ENCODE measurements at regions of chr7 and their contacts with region 1.

Region 1: GRCh38 chr7:99408379-99409191 is at the starts of genes BUD31 and PDAP1:
- DNase-seq: peak; percentile 90
- ATAC-seq: peak; percentile 86
- H3K4me3 ChIP-seq: peak within 1 kb of the TSS; percentile 100
- H3K27ac ChIP-seq: peak within 1 kb of the TSS; percentile 99
- H3K4me1 ChIP-seq: peaks cover 12% of the 10 kb centered on the region
- H3K27me3 ChIP-seq: no peaks in the 10 kb centered on the region
- CTCF ChIP-seq: no peak
- EP300 ChIP-seq: peak in 1 of 2 experiments; percentile 43; a peak in 1 of 4 replicates
- POLR2A ChIP-seq: peak; percentile 88
- RAD21 ChIP-seq: no peak
- polyA plus RNA-seq, gene BUD31: 125 to 127 TPM
- polyA plus RNA-seq, gene PDAP1: 6.6 to 13.8 TPM

Region 2: DNA sequence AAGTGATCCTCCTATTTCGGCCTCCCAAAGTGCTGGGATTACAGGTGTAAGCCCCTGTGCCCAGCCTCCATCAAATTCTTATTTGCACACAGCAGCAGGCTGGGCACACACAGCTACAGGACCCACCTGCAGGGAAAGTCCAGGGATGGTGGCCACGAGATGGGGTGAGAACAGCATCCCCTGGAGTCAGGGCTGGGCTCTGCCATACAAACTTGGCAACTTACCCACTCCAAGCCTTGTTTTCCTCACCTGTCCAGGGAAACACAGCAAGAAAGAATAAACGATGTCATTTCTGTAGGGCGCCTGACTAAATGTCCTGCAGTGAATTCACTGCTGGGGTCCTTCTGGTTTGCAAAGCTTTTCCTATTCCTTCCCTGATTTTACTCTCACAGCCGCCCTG is 130.4 kb before region 1 on chr7:
- CTCF ChIA-PET with region 1: no interaction called
- POLR2A ChIA-PET with region 1: no interaction called
- RAD21 ChIA-PET with region 1: no interaction called
- SMC1A ChIA-PET with region 1: no interaction called
- in situ Hi-C with region 1: no loop called
- intact Hi-C with region 1: no loop called
- DNase-seq: no peak
- ATAC-seq: peak; percentile 45; the same call in 1 of the 3 replicates
- H3K4me3 ChIP-seq: no peak overlapping the region
- H3K27ac ChIP-seq: no peak overlapping the region
- H3K4me1 ChIP-seq: peaks cover 6% of the 10 kb centered on the region
- H3K27me3 ChIP-seq: no peaks in the 10 kb centered on the region; a peak in 1 of 4 replicates
- CTCF ChIP-seq: peak in 1 of 3 experiments; percentile 13; a peak in 1 of 6 replicates
- EP300 ChIP-seq: no peak
- POLR2A ChIP-seq: no peak
- RAD21 ChIP-seq: no peak

Region 3: DNA sequence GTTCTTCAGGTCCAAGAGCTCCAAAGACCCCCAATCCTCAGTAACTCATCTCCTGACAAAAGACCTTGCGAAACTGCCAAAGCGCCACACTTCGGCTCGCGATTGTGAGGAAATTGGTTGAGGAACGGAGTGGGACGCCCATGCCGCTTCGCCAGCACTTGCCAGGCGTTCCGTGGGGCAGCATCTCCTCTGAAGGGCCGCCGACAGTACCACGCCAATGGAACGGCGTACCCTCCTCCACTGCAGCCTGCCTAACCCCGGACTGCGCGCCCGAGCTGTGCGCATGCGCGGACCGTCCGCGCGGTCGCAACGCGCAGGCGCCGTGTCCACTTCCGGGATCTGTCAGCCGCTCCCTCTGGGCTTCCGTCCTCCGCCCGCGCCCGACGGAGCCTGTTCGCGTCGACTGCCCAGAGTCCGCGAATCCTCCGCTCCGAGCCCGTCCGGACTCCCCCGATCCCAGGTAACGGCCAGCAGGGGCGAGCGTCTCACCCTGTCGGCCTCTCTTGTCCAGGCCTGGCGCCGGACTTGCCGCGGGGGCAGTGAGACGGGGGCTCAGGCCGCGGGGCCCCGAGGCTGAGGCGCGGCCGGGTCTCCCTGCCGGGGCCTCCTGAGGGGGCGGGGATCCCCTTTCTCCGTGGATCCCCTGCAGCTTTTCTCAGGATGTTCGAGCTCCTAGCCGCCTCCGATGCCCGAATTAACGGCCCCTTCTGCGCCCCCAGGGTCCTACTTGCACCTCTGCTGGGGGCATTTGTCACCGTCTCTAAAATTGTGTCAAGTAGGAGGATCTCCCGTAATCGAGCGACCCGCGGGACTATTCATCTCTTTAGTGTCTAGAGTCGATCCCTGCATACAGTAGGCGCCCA is 82.8 kb before region 1 on chr7 and contains the start of gene ARPC1A:
- CTCF ChIA-PET with region 1: interaction called, 3 read pairs
- POLR2A ChIA-PET with region 1: interaction called, 16 read pairs
- RAD21 ChIA-PET with region 1: interaction called, 5 read pairs
- SMC1A ChIA-PET with region 1: interaction called, 4 read pairs
- in situ Hi-C with region 1: no loop called
- intact Hi-C with region 1: no loop called
- DNase-seq: peak; percentile 87
- ATAC-seq: peak; percentile 93
- H3K4me3 ChIP-seq: peak within 1 kb of the TSS; percentile 100
- H3K27ac ChIP-seq: peak within 1 kb of the TSS; percentile 63
- H3K4me1 ChIP-seq: peaks cover 4% of the 10 kb centered on the region; the same call in 1 of the 2 replicates
- H3K27me3 ChIP-seq: no peaks in the 10 kb centered on the region
- CTCF ChIP-seq: peak in 2 of 3 experiments; percentile 3 to 10; a peak in 2 of 6 replicates
- EP300 ChIP-seq: no peak
- POLR2A ChIP-seq: peak; percentile 99
- RAD21 ChIP-seq: no peak
- polyA plus RNA-seq, gene ARPC1A: 102 to 103 TPM

Region 4: GRCh38 chr7:99364961-99365817 is 43.4 kb before region 1 on chr7:
- CTCF ChIA-PET with region 1: interaction called, 31 read pairs
- POLR2A ChIA-PET with region 1: no interaction called
- RAD21 ChIA-PET with region 1: interaction called, 7 read pairs
- SMC1A ChIA-PET with region 1: interaction called, 4 read pairs
- in situ Hi-C with region 1: no loop called
- intact Hi-C with region 1: loop called (anchors 5 kb)
- DNase-seq: no peak
- ATAC-seq: peak; percentile 96
- H3K4me3 ChIP-seq: no peak overlapping the region
- H3K27ac ChIP-seq: no peak overlapping the region
- H3K4me1 ChIP-seq: no peaks in the 10 kb centered on the region
- H3K27me3 ChIP-seq: no peaks in the 10 kb centered on the region
- CTCF ChIP-seq: peak; percentile 52 to 71 (median 69)
- EP300 ChIP-seq: no peak
- POLR2A ChIP-seq: no peak
- RAD21 ChIP-seq: peak; percentile 61

Region 5: GRCh38 chr7:99374103-99375064 is 34.2 kb before region 1 on chr7 and contains the start of gene ARPC1B:
- CTCF ChIA-PET with region 1: interaction called, 7 read pairs
- POLR2A ChIA-PET with region 1: interaction called, 51 read pairs
- RAD21 ChIA-PET with region 1: interaction called, 15 read pairs
- SMC1A ChIA-PET with region 1: interaction called, 20 read pairs
- in situ Hi-C with region 1: no loop called
- intact Hi-C with region 1: loop called (anchors 5 kb)
- DNase-seq: no peak
- ATAC-seq: peak; percentile 84
- H3K4me3 ChIP-seq: peak within 1 kb of the TSS; percentile 96
- H3K27ac ChIP-seq: peak within 1 kb of the TSS; percentile 85
- H3K4me1 ChIP-seq: peaks cover 22% of the 10 kb centered on the region
- H3K27me3 ChIP-seq: no peaks in the 10 kb centered on the region
- CTCF ChIP-seq: no peak
- EP300 ChIP-seq: no peak
- POLR2A ChIP-seq: peak; percentile 93
- RAD21 ChIP-seq: no peak
- polyA plus RNA-seq, gene ARPC1B: 14.1 to 135 TPM

Region 6: DNA sequence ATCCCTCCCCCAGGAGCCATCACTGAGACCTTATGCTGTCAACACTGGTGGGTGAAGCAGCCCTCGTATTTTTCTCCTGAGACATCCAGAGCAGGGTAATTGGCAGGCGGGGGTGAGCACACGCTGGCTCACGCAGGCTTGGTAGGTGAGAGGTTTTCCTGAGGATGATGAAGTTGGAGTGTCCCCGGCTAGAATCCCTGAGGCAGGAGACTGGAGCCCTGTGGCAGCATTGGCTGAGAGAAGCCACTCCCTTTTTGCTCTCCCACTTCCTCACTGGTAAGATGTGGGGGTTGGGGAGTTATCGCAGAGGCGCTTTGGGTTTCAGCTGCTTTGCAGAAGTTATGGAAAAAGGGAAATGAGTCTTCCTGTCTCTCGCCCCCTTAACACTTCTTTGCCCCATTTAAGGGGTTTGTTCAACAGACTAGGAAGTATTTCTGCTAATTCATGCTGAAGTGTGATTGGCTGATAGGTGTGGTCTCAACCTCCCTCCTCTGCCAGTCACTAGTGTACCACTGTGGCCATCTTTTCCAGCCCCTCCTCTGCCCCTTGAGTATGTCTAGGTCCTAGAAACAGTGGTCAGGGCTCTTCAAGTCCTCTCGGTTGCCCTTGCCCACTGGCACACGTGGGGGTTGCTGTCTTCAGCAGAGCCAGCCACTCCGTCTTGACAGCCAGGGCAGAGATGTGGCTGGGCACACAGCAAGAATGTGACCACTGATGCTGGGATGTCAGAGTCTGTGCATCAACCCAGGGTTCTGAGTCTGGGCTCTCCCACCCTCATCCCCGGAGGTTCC is 28.4 kb before region 1 on chr7:
- CTCF ChIA-PET with region 1: interaction called, 7 read pairs
- POLR2A ChIA-PET with region 1: interaction called, 51 read pairs
- RAD21 ChIA-PET with region 1: interaction called, 15 read pairs
- SMC1A ChIA-PET with region 1: interaction called, 20 read pairs
- in situ Hi-C with region 1: no loop called
- intact Hi-C with region 1: loop called (anchors 2 kb)
- DNase-seq: peak; percentile 94
- ATAC-seq: peak; percentile 73
- H3K4me3 ChIP-seq: peak overlapping the region; percentile 64
- H3K27ac ChIP-seq: peak overlapping the region; percentile 100
- H3K4me1 ChIP-seq: peaks cover 45% of the 10 kb centered on the region
- H3K27me3 ChIP-seq: no peaks in the 10 kb centered on the region
- CTCF ChIP-seq: no peak
- EP300 ChIP-seq: peak; percentile 56 to 84; a peak in 3 of 4 replicates
- POLR2A ChIP-seq: peak; percentile 67
- RAD21 ChIP-seq: no peak

Region 7: GRCh38 chr7:99438573-99439480 is 30.2 kb after region 1 on chr7 and contains the starts of genes CPSF4 and PTCD1:
- CTCF ChIA-PET with region 1: no interaction called
- POLR2A ChIA-PET with region 1: interaction called, 16 read pairs
- RAD21 ChIA-PET with region 1: interaction called, 8 read pairs
- SMC1A ChIA-PET with region 1: interaction called, 6 read pairs
- in situ Hi-C with region 1: no loop called
- intact Hi-C with region 1: no loop called
- DNase-seq: peak; percentile 71
- ATAC-seq: peak; percentile 96
- H3K4me3 ChIP-seq: peak within 1 kb of the TSS; percentile 93
- H3K27ac ChIP-seq: peak within 1 kb of the TSS; percentile 80
- H3K4me1 ChIP-seq: peaks cover 11% of the 10 kb centered on the region
- H3K27me3 ChIP-seq: no peaks in the 10 kb centered on the region
- CTCF ChIP-seq: no peak
- EP300 ChIP-seq: no peak
- POLR2A ChIP-seq: peak; percentile 89
- RAD21 ChIP-seq: no peak
- polyA plus RNA-seq, gene CPSF4: 13.6 to 14.9 TPM
- polyA plus RNA-seq, gene PTCD1: 0.26 to 0.42 TPM